ENCODE measurements at regions of chr11 and their contacts with region 1.

Region 1: DNA sequence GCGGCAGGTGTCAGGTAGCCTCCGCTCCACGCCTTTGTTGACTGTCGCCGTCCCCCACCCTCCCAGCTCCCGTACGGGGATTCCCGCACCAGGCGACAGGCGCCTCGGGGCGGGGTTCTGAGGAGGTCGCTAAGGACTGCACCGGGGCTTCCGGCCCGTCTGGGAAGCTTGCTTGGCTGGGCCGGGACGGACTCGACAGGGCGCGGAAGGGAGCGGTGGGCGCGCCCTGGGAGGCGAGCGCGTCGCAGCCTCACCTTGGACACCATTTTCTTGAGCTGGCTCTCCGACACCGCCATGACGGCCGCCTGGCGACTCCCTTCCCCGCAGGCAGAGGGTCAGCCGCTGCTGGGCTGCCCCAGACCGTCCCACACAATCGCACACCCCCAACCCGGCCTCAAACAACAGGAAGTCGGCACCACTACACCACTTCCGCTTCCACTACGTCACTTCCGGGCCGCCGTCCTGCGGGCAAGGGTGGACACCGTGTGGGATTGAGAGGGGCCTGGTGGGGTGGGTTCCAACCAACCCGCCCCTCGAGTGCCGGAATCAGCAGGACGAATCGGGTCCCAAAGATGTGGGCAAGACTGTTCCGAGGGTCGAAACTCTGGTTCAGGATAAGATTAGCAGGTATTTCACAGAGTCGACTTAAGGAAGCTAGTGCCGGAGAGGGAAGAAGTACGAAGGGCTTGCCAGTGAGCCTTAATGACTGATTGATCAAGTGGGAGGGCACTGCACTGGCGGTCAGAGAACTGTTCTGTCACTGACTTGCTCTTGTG is at the start of gene TSG101:
- DNase-seq: peak; percentile 89
- ATAC-seq: peak; percentile 89
- H3K4me3 ChIP-seq: peak within 1 kb of the TSS; percentile 81
- H3K27ac ChIP-seq: peak within 1 kb of the TSS; percentile 92
- H3K4me1 ChIP-seq: peaks cover 32% of the 10 kb centered on the region
- H3K27me3 ChIP-seq: no peaks in the 10 kb centered on the region
- CTCF ChIP-seq: no peak
- total RNA-seq, gene TSG101: 42.2 and 46.9 TPM in 2 replicates

Region 2: DNA sequence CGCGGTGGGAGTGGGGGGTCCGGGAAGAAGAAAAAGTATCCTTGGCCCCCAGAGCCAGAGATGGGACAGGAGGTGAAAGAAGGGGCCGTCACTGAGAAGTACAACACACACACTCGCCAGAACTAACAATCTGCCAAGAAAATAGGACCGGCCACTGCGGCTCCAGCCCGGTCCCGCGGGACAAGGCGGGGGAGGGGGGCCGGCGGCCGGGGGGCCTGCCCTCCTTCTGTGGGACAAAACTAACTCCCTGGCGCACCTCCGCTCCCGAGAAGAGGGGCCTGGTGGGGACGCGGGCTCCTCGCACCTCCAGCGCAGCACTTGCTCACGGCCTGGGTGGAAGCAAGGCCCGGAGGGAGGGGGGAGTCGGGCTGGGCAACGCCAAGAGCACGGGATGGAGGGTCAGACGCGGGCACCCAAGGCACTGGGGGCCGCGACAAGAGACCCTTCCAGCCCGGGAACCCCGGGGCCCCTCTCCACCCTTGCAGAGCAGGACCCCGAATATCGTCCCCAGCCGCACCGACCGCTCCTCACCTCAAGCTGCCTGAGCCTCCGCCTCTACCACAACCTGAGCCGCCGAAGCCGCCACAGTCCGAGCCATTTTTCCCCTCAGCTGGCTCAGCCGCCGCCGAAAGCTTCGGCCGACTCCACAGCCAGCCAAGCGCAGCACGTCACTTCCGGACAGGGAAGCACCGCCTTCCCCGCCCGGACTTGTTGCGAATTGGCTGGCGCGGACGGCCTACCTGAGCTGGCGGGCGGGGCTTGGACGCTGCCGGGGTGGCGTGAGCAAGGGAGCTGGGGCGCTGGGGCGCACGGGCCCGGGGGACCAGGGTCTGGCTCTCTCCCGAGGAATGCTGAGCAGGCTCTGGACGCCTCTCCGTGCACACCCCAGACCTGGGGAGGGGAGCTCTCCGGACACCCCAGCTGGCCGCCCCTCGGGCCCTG is 1319.1 kb before region 1 on chr11 and contains the start of gene PIK3C2A:
- CTCF ChIA-PET with region 1: no interaction called
- POLR2A ChIA-PET with region 1: interaction called, 14 read pairs
- intact Hi-C with region 1: no loop called
- DNase-seq: peak; percentile 93
- ATAC-seq: peak; percentile 83
- H3K4me3 ChIP-seq: peak within 1 kb of the TSS; percentile 79
- H3K27ac ChIP-seq: peak within 1 kb of the TSS; percentile 76
- H3K4me1 ChIP-seq: peaks cover 16% of the 10 kb centered on the region
- H3K27me3 ChIP-seq: no peaks in the 10 kb centered on the region
- CTCF ChIP-seq: no peak
- total RNA-seq, gene PIK3C2A: 30.1 and 35.0 TPM in 2 replicates

Region 3: DNA sequence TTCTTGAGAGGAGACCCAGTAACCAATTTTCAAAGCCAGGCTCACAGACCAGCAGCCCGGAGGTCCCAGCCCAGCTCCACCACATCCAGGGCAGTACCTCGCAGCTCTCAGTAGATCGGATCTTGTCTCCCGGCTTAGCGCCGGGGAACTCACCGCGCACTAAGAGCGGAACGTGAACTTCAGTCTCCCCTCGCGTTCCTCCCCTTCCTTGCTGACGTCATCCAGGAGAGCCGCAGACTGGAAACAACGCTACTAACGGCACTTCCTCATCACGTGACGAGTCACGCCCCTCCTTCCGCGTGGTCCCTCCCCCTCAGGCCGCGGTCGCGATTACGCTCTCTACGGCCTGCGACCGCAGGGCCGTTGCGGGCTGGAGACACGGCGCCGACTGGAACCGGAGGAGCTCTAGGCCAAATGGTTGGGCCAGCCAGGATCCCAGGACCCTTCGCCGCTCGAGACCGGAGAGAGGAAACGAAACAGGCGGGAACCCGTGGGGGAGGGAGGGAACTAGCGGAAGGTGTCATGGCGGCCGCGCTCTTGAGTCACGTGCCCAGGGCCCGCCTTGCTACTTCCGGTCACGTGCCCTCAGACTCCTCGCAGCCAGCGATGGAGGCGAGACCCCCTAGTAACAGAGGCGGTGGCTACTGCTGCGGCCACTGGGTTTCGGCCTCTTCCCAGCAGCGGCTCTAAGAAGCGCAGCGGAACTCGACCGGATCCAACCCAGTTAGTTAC is 204.6 kb before region 1 on chr11 and contains the starts of genes GTF2H1 and HPS5:
- CTCF ChIA-PET with region 1: no interaction called
- POLR2A ChIA-PET with region 1: no interaction called
- intact Hi-C with region 1: loop called (anchors 2 kb)
- DNase-seq: peak; percentile 97
- ATAC-seq: peak; percentile 85
- H3K4me3 ChIP-seq: peak within 1 kb of the TSS; percentile 89
- H3K27ac ChIP-seq: peak within 1 kb of the TSS; percentile 92
- H3K4me1 ChIP-seq: peaks cover 41% of the 10 kb centered on the region
- H3K27me3 ChIP-seq: no peaks in the 10 kb centered on the region
- CTCF ChIP-seq: no peak
- total RNA-seq, gene GTF2H1: 32.7 and 33.5 TPM in 2 replicates
- total RNA-seq, gene HPS5: 15.2 and 15.6 TPM in 2 replicates

Region 4: DNA sequence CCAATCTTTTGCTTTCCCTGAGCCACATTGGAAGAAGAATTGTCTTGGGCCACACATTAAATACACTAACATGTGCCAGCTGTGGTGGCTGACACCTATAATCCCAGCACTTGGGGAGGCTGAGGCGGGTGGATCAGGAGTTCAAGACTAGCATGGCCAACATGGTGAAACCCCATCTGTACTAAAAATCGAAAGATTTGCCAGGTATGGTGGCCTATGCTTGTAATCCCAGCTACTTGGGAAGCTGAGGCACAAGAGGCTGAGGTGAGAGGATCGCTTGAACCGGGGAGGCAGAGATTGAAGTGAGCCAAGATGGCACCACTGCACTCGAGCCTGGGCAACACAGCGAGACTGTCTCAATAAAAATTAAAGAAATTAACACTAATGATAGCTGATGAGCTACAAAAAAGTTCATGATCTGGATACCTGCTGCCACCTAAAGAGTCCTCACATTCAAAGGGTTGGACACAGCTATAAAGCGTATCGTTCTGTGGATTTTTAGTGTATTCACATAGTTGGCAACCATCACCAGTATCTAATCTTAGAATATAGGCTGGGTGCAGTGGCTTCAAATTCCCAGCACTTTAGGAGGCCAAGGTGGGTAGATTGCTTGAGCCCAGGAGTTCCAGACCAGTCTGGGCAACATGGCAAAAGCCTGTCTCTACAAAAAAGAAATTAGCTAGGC is 118.0 kb before region 1 on chr11:
- CTCF ChIA-PET with region 1: no interaction called
- POLR2A ChIA-PET with region 1: interaction called, 9 read pairs
- intact Hi-C with region 1: loop called (anchors 2 kb)
- DNase-seq: peak; percentile 18
- ATAC-seq: peak; percentile 7
- H3K4me3 ChIP-seq: no peak overlapping the region
- H3K27ac ChIP-seq: peak overlapping the region; percentile 69
- H3K4me1 ChIP-seq: peaks cover 26% of the 10 kb centered on the region
- H3K27me3 ChIP-seq: no peaks in the 10 kb centered on the region
- CTCF ChIP-seq: no peak

Region 5: DNA sequence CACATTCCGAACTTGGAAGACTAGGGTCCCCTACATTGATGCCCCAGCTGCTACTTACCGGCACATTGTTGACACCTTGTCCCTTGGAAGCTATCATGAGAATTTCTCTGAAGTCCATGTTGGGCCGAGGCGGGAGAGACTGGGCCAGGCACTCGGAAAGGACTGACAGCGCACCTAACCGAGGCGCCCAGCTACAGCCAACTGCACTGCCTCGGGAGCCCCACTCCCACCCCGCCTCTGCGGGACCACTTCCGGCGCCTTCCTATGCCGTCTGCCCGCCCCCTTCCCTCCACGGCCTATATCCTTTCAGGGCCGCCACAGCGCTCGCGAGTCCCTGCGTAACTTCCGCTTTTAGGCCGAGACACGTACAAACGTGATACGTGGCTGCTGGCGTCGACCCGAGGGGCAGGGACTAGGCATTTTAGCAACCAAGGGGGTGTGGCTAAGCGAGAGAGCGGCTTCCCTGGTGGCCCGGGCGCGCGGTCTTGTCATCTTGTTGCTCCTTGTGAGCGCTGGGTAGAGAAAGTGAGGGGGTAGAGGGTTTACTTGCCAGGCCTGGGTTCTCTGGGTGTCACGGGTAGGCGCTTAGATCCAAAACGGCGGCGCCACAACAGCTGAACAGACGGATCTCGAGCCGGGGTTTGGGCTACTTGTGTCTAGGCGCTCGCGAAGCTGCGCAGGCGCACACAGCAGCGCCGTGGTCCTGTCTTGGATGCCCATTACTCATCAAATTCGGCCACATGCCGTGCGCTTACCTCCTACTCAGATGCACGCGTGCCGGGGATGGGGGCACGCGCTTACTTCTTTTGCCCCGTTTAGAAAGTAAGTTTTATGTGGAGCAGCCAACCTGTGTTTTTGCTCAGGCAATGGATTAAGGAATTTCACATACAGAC is 107.7 kb after region 1 on chr11 and contains the start of gene SPTY2D1:
- CTCF ChIA-PET with region 1: no interaction called
- POLR2A ChIA-PET with region 1: no interaction called
- intact Hi-C with region 1: loop called (anchors 5 kb)
- DNase-seq: peak; percentile 98
- ATAC-seq: peak; percentile 94
- H3K4me3 ChIP-seq: peak within 1 kb of the TSS; percentile 86
- H3K27ac ChIP-seq: peak within 1 kb of the TSS; percentile 64
- H3K4me1 ChIP-seq: peaks cover 10% of the 10 kb centered on the region
- H3K27me3 ChIP-seq: no peaks in the 10 kb centered on the region
- CTCF ChIP-seq: no peak
- total RNA-seq, gene SPTY2D1: 15.6 and 16.6 TPM in 2 replicates

Measured in PC-3 (cell line).